Activated CD4-positive, alpha-beta memory T cell treated with anti-CD3 and anti-CD28 coated beads, Interleukin-2, amount 10 ng/mL, durations not matched to agents 7 days and 5 days (primary cell): ENCODE measurements at regions of chr17 and their contacts with region 1.

Region 1: DNA sequence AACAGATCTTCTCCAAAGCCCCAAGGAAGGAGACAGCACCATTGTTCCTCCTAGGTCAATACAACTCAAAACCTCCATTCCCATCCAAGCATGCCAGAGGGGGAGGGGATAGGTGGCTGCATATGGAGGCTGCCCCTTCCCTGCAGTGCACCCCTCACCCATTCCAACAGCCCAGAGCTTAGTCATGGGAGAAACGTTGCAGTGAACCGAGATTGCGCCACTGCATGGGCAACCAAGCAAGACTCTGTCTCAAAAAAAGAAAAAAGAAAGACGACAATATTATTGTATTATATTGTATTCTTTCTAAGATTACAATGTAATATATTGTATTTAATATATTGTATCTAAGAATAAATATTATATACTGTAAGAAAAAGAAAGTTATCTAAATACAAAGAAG is 36.4 kb upstream of the CD300E start:
- DNase-seq: no peak
- H3K4me3 Mint-ChIP-seq: no peak overlapping the region
- H3K27ac Mint-ChIP-seq: no peak overlapping the region
- H3K4me1 Mint-ChIP-seq: peaks cover 8% of the 10 kb centered on the region
- H3K27me3 Mint-ChIP-seq: peaks cover 64% of the 10 kb centered on the region

Region 2: GRCh38 chr17:74671031-74671771 is 11.3 kb after region 1 on chr17:
- CTCF ChIA-PET with region 1: interaction called, 29 read pairs
- POLR2A ChIA-PET with region 1: no interaction called
- DNase-seq: peak; percentile 78
- H3K4me3 Mint-ChIP-seq: no peak overlapping the region
- H3K27ac Mint-ChIP-seq: no peak overlapping the region
- H3K4me1 Mint-ChIP-seq: no peaks in the 10 kb centered on the region
- H3K27me3 Mint-ChIP-seq: peaks cover 72% of the 10 kb centered on the region

Region 3: GRCh38 chr17:74725111-74725510 is 65.2 kb after region 1 on chr17:
- CTCF ChIA-PET with region 1: interaction called, 12 read pairs
- POLR2A ChIA-PET with region 1: no interaction called
- DNase-seq: no peak
- H3K4me3 Mint-ChIP-seq: no peak overlapping the region
- H3K27ac Mint-ChIP-seq: no peak overlapping the region
- H3K4me1 Mint-ChIP-seq: peaks cover 4% of the 10 kb centered on the region
- H3K27me3 Mint-ChIP-seq: peaks cover 28% of the 10 kb centered on the region

Region 4: DNA sequence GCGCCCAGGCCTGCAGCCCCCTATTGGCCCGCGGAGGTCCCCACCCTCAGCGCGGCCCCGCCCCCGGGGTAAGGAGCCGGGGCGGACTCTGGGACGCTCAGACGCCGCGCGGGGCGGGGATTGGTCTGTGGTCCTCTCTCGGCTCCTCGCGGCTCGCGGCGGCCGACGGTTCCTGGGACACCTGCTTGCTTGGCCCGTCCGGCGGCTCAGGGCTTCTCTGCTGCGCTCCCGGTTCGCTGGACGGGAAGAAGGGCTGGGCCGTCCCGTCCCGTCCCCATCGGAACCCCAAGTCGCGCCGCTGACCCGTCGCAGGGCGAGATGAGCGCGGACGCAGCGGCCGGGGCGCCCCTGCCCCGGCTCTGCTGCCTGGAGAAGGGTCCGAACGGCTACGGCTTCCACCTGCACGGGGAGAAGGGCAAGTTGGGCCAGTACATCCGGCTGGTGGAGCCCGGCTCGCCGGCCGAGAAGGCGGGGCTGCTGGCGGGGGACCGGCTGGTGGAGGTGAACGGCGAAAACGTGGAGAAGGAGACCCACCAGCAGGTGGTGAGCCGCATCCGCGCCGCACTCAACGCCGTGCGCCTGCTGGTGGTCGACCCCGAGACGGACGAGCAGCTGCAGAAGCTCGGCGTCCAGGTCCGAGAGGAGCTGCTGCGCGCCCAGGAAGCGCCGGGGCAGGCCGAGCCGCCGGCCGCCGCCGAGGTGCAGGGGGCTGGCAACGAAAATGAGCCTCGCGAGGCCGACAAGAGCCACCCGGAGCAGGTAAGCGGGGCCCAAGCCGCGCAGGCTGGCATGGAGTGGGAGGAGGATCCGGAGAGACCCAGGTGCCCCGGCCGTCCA is 88.8 kb after region 1 on chr17 and contains the start of gene NHERF1:
- CTCF ChIA-PET with region 1: interaction called, 35 read pairs
- POLR2A ChIA-PET with region 1: interaction called, 3 read pairs
- DNase-seq: peak; percentile 96
- H3K4me3 Mint-ChIP-seq: peak within 1 kb of the TSS; percentile 94
- H3K27ac Mint-ChIP-seq: peak within 1 kb of the TSS; percentile 85
- H3K4me1 Mint-ChIP-seq: peaks cover 61% of the 10 kb centered on the region
- H3K27me3 Mint-ChIP-seq: no peaks in the 10 kb centered on the region
- total RNA-seq, gene NHERF1: 320 to 328 TPM

Region 5: GRCh38 chr17:74790161-74791054 is 130.5 kb after region 1 on chr17:
- CTCF ChIA-PET with region 1: interaction called, 27 read pairs
- POLR2A ChIA-PET with region 1: no interaction called
- DNase-seq: no peak
- H3K4me3 Mint-ChIP-seq: no peak overlapping the region
- H3K27ac Mint-ChIP-seq: peak overlapping the region; percentile 41
- H3K4me1 Mint-ChIP-seq: peaks cover 40% of the 10 kb centered on the region
- H3K27me3 Mint-ChIP-seq: no peaks in the 10 kb centered on the region

Region 6: GRCh38 chr17:74961657-74962490 is 302.0 kb after region 1 on chr17:
- CTCF ChIA-PET with region 1: interaction called, 15 read pairs
- POLR2A ChIA-PET with region 1: no interaction called
- DNase-seq: peak; percentile 86
- H3K4me3 Mint-ChIP-seq: no peak overlapping the region
- H3K27ac Mint-ChIP-seq: no peak overlapping the region
- H3K4me1 Mint-ChIP-seq: peaks cover 7% of the 10 kb centered on the region
- H3K27me3 Mint-ChIP-seq: peaks cover 5% of the 10 kb centered on the region